ENCODE measurements at regions of chr4 and their contacts with region 1.

Region 1: DNA sequence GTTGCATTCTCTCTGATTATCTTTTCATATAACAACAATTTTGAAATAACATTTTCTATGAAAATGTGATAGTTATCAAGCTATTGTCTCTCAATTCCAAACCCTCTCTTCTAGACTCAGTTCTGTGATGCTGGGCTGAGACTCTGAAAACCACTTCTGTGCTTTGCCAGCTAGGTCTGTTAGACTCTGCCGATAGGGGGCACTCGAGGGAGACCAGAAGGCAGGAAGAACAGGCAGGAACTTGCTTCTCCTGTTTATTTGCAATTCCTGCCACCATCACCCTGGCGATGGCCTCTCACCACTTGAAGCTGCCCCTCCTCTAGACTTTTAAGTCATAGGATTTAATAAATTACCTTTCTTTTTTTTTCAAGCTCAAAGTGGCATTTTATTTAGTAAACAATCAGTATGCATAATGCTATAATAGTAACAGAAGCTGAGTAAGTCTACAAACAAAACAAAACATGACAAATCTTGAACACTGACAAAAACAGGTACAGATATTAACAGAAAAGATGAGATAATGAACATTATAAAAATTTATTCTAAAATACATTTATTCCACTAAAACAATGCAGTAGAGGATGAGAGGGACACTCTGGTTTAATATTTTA is 49.7 kb downstream of the RASL11B start:
- DNase-seq: peak; percentile 82
- H3K4me3 Mint-ChIP-seq: no peak overlapping the region
- H3K27ac Mint-ChIP-seq: no peak overlapping the region
- H3K4me1 Mint-ChIP-seq: no peaks in the 10 kb centered on the region
- H3K27me3 Mint-ChIP-seq: no peaks in the 10 kb centered on the region

Region 2: GRCh38 chr4:52750819-52751486 is 160.8 kb before region 1 on chr4 and contains the start of gene ERVMER34-1:
- CTCF ChIA-PET with region 1: no interaction called
- POLR2A ChIA-PET with region 1: no interaction called
- intact Hi-C with region 1: no loop called
- DNase-seq: peak; percentile 23
- H3K4me3 Mint-ChIP-seq: peak within 1 kb of the TSS; percentile 61
- H3K27ac Mint-ChIP-seq: no peak within 1 kb of the TSS
- H3K4me1 Mint-ChIP-seq: peaks cover 10% of the 10 kb centered on the region
- H3K27me3 Mint-ChIP-seq: peaks cover 51% of the 10 kb centered on the region
- total RNA-seq, gene ERVMER34-1: 0.07 to 0.17 TPM

Region 3: DNA sequence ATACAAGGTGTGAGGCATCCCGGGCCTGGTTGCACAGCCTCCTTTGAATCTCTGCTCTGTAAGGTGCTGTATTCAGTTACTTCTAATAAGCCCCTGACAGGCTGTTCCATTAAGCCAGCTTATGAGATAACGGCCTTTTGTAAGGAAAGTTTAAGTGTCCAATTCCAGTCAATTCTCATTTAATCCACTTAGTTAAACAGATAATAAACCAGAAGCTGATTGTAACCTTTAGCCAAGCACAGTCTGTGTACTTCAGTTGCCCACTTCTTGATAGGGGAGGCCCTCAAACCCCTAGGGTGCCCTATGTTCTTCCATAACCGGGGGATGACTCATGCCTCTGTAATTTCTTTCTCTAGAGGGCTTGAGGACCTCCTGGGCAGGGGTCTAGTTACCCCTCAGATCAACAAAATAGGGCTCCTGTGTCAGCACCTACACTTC is 13.8 kb after region 1 on chr4:
- CTCF ChIA-PET with region 1: interaction called, 10 read pairs
- POLR2A ChIA-PET with region 1: no interaction called
- intact Hi-C with region 1: no loop called
- DNase-seq: no peak
- H3K4me3 Mint-ChIP-seq: no peak overlapping the region
- H3K27ac Mint-ChIP-seq: no peak overlapping the region
- H3K4me1 Mint-ChIP-seq: no peaks in the 10 kb centered on the region
- H3K27me3 Mint-ChIP-seq: no peaks in the 10 kb centered on the region

Region 4: DNA sequence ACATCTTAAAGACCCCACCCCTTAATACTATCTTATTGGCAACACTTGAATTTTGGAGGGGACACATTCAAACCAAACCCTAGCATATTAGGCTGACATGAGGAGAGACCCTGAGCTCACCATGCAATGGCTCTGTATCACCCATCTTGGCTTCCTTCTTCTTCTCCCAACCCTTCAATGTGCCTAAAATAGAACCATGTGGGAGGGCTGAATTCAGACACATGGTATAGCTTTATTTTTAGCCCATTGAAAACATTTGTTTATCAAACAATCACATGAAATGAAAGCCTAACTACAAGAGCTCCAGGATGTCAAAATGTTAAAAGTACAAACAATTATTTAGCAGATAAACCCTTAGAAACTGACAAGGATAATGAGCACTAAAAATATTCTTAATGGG is 31.9 kb after region 1 on chr4:
- CTCF ChIA-PET with region 1: interaction called, 11 read pairs
- POLR2A ChIA-PET with region 1: no interaction called
- intact Hi-C with region 1: no loop called
- DNase-seq: no peak
- H3K4me3 Mint-ChIP-seq: no peak overlapping the region
- H3K27ac Mint-ChIP-seq: no peak overlapping the region
- H3K4me1 Mint-ChIP-seq: no peaks in the 10 kb centered on the region
- H3K27me3 Mint-ChIP-seq: no peaks in the 10 kb centered on the region

Region 5: DNA sequence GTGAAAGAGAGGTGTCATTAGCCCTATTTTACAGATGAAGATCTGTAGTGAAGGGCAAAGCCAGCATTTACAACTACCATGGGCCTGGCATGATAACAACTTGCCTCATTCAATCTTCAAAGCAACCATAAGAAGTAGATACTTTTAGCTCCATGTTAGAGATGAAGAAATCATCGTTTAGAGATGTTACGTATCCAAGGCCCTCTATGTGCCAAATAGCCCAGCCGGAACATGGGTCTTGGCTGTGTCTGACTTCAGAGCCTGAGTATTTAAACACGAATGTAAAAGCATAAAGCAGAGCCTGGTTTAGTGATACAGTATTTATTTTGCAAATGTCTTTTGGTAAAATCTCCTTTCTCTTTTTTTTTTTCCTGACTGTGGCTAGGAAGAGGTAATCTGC is 147.5 kb after region 1 on chr4:
- CTCF ChIA-PET with region 1: no interaction called
- POLR2A ChIA-PET with region 1: no interaction called
- intact Hi-C with region 1: no loop called
- DNase-seq: no peak
- H3K4me3 Mint-ChIP-seq: no peak overlapping the region
- H3K27ac Mint-ChIP-seq: no peak overlapping the region
- H3K4me1 Mint-ChIP-seq: no peaks in the 10 kb centered on the region
- H3K27me3 Mint-ChIP-seq: no peaks in the 10 kb centered on the region

Region 6: DNA sequence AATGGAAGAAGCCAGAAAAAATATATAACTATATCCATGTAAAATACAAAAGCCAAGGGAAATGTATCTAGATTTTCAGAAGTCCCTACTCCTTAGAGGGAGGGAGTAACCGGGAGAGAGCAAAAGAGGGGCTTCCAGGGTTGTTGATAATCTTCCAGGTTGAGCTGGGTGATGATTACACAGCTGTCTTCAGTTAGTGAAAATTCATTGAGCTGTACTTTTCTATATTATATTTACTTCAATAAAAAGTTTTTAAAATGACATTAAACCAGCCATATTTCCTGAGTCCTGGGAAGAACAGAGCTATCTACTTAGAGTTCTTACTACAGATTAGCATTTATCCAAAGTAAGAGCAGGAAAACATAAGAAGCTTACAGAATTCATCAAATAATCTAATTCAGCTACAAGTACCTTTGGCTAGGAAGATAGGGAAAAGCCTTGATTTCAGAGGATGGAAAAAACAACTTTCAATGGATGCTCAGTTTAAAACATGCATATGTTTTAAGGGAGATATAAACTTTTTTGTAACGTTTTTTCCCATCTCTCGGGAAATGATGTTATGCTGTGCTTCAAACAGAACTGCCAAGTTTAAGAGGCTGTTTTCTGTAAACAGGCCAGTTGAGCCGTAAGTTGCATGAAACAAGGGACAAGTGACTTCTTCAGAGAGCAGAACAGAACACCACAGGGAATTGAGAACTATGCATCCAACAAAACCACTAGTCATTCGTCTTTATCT is 249.4 kb after region 1 on chr4:
- CTCF ChIA-PET with region 1: no interaction called
- POLR2A ChIA-PET with region 1: no interaction called
- intact Hi-C with region 1: no loop called
- DNase-seq: no peak
- H3K4me3 Mint-ChIP-seq: no peak overlapping the region
- H3K27ac Mint-ChIP-seq: no peak overlapping the region
- H3K4me1 Mint-ChIP-seq: no peaks in the 10 kb centered on the region
- H3K27me3 Mint-ChIP-seq: no peaks in the 10 kb centered on the region

Measured in activated CD4-positive, alpha-beta memory T cell treated with anti-CD3 and anti-CD28 coated beads for 36 hours (primary cell).